ENCODE measurements at regions of chr10 and their contacts with region 1.

Region 1: GRCh38 chr10:3248888-3249758 is 76.5 kb upstream of the PITRM1 start:
- DNase-seq: peak; percentile 81
- H3K4me3 ChIP-seq: peak overlapping the region in 1 of 3 experiments; percentile 24
- H3K27ac ChIP-seq: peak overlapping the region; percentile 77
- H3K4me1 ChIP-seq: peaks cover 10% of the 10 kb centered on the region
- H3K27me3 ChIP-seq: peaks cover 4 to 6% of the 10 kb centered on the region in 2 experiments
- CTCF ChIP-seq: no peak
- POLR2A ChIP-seq: no peak

Region 2: DNA sequence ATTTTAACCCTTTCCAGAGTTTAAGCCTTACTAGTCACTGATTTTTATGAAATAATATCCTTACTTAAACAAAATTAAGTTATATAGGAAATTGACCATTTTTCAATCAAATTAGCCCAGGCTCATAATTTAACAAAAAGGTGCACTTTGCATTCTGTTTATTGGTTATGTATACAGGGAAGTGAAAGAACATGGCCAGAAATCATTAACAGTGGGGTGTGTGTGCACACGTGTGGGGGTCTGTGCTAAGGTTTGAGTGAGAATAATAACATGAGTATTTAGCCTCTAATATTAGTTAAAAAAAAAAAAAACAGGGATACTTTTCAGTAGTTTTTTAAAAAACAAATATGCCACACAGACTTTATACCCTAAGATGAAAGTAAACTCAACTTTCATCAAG is 692.2 kb before region 1 on chr10:
- CTCF ChIA-PET with region 1: no interaction called
- POLR2A ChIA-PET with region 1: no interaction called
- dilution Hi-C with region 1: no loop called
- intact Hi-C with region 1: no loop called
- DNase-seq: no peak
- H3K4me3 ChIP-seq: no peak overlapping the region
- H3K27ac ChIP-seq: no peak overlapping the region
- H3K4me1 ChIP-seq: no peaks in the 10 kb centered on the region
- H3K27me3 ChIP-seq: no peaks in the 10 kb centered on the region
- CTCF ChIP-seq: no peak
- POLR2A ChIP-seq: no peak

Region 3: GRCh38 chr10:3365630-3366029 is 116.5 kb after region 1 on chr10:
- CTCF ChIA-PET with region 1: no interaction called
- POLR2A ChIA-PET with region 1: no interaction called
- dilution Hi-C with region 1: no loop called
- intact Hi-C with region 1: loop called (anchors 10 kb)
- DNase-seq: peak; percentile 32
- H3K4me3 ChIP-seq: no peak overlapping the region
- H3K27ac ChIP-seq: no peak overlapping the region
- H3K4me1 ChIP-seq: peaks cover 4% of the 10 kb centered on the region
- H3K27me3 ChIP-seq: no peaks in the 10 kb centered on the region
- CTCF ChIP-seq: no peak
- POLR2A ChIP-seq: no peak

Measured in endothelial cell of umbilical vein (primary cell).